ENCODE measurements at regions of chr4 and their contacts with region 1.

Region 1: DNA sequence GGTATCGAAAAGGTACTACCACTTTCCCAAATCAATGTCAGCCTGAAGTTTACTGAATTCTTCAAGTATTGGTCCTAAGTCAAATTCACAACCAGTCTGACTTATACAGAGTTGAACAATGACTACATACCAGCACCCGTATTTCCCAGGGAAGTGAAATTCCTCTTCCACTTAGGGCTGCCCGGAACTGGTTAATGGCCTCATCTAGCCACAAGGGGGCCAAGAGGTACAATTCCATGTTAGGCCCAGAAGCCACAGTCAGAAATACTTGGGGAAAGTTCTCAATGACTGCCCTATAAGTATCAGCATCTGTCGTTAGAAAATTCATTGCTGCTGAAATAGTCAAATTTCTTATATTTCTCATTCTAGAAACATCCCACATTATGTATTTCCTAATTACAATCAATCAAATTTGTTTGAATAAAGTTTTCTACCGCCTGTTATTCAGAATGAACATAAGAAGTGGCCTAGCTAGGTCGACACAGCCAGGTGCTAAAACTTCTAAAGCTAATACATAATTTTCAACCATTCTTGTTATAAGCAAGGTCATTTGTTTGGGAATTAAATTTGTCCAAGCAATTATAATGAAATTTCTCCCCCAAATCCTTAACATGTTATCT is 5.7 kb upstream of the PCDH7 start:
- DNase-seq: peak in 1 of 2 donors; percentile 22
- H3K4me3 ChIP-seq: no peak overlapping the region
- H3K27ac ChIP-seq: no peak overlapping the region
- H3K4me1 ChIP-seq: peaks cover 0 to 9% (median 0%) of the 10 kb centered on the region in 4 donors
- H3K27me3 ChIP-seq: no peaks in the 10 kb centered on the region
- CTCF ChIP-seq: peak; percentile 68 to 73

Region 2: DNA sequence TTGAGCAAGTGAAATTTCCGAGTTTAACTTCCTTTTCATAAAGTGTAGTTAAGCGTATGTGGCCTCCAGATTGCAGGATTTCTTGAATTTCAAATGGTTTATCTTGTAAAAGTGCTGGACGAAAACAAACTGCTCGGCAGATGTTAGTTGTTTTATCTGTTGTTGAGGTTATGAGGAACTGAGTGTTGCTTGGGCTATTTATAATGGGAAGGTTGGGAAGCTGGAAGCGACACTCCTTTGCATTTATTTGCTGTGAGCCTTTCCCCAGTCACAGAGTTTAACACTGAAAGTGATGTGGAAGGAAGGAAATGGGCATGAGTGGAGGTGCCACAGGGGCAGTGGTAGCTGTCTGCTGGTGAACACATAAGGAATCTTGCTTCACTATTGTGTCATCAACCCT is 290.5 kb after region 1 on chr4:
- intact Hi-C with region 1: no loop called
- DNase-seq: no peak
- H3K4me3 ChIP-seq: no peak overlapping the region
- H3K27ac ChIP-seq: no peak overlapping the region
- H3K4me1 ChIP-seq: peaks cover 0 to 13% (median 0%) of the 10 kb centered on the region in 4 donors
- H3K27me3 ChIP-seq: no peaks in the 10 kb centered on the region
- CTCF ChIP-seq: no peak

Region 3: DNA sequence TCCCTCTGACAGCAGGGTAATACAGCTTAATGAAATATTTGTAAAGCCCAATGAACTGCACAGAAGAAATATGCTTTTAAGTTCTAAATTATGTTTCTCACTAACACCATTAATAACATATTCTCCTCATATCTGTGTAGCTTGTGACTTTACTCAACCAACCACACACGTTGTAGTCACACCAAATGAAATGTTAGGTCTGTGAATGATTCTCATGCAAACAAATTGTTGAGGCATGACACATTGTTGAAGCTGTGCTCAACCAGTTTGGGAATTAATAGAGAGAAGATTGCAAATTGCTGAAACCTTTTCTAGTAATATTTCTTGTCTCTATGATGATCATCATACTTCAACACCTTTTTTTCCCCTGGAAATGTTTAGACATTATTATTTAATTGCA is 651.5 kb after region 1 on chr4:
- intact Hi-C with region 1: loop called (anchors 5 kb)
- DNase-seq: no peak
- H3K4me3 ChIP-seq: no peak overlapping the region
- H3K27ac ChIP-seq: no peak overlapping the region
- H3K4me1 ChIP-seq: no peaks in the 10 kb centered on the region
- H3K27me3 ChIP-seq: no peaks in the 10 kb centered on the region
- CTCF ChIP-seq: no peak

Region 4: DNA sequence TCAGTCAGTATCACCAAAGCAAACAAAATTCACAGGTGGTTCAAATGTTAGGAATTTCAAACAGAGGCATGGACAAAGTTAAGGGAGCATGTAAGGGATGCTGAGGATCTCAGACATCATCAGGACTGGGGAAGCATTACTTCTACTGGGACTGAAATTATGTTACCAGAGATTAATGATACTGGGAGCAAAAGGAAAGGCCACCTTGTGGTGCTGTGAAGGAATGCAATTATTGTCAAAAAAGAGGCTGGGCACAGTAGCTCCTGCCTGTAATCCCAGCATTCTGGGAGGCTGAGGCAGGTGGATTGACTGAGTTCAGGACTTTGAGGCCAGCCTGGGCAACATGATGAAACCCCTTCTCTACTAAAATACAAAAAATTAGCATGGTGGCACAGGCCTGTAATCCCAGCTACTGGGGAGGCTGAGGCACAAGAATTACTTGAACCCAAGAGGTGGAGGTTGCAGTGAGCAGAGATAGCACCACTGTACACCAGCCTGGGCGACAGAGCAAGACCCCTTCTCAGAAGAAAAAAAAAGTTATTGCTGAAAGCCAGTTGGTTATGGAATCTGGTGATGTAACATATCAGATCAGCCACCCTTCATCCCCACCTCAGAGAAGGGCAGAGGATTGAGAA is 959.9 kb after region 1 on chr4:
- intact Hi-C with region 1: loop called (anchors 5 kb)
- DNase-seq: no peak
- H3K4me3 ChIP-seq: no peak overlapping the region
- H3K27ac ChIP-seq: no peak overlapping the region
- H3K4me1 ChIP-seq: no peaks in the 10 kb centered on the region
- H3K27me3 ChIP-seq: no peaks in the 10 kb centered on the region
- CTCF ChIP-seq: peak; percentile 47 to 49